ENCODE measurements at regions of chr6 and their contacts with region 1.

Region 1: DNA sequence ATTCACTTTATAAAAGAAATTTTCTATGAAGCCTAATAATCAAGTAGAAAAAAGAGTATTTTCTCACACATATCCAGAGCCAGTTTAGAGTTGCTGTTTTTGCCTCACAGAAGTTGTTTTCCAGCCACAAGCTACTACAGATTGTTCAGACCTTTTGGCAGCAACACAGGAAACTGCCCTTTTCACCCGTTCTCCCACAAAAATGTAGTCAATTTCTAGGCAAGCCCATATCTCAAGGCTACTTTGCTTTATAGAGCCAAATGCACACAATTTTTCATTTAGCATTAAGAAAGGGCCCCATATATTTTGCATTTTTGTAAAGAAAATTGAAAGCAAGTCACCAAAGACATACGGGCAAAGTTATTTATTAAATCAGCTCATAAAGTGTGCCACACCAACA is 49.5 kb downstream of the EPB41L2 start:
- DNase-seq: no peak
- ATAC-seq: no peak
- H3K4me3 ChIP-seq: no peak overlapping the region
- H3K27ac ChIP-seq: no peak overlapping the region
- H3K4me1 ChIP-seq: peaks cover 6% of the 10 kb centered on the region
- H3K27me3 ChIP-seq: no peaks in the 10 kb centered on the region
- CTCF ChIP-seq: no peak

Region 2: GRCh38 chr6:130933712-130934200 is 79.7 kb before region 1 on chr6:
- CTCF ChIA-PET with region 1: no interaction called
- POLR2A ChIA-PET with region 1: no interaction called
- intact Hi-C with region 1: loop called (anchors 5 kb)
- DNase-seq: peak; percentile 86
- ATAC-seq: peak; percentile 72
- H3K4me3 ChIP-seq: peak overlapping the region; percentile 32; the same call in 1 of the 2 replicates
- H3K27ac ChIP-seq: peak overlapping the region; percentile 66
- H3K4me1 ChIP-seq: peaks cover 75% of the 10 kb centered on the region
- H3K27me3 ChIP-seq: no peaks in the 10 kb centered on the region
- CTCF ChIP-seq: no peak

Region 3: DNA sequence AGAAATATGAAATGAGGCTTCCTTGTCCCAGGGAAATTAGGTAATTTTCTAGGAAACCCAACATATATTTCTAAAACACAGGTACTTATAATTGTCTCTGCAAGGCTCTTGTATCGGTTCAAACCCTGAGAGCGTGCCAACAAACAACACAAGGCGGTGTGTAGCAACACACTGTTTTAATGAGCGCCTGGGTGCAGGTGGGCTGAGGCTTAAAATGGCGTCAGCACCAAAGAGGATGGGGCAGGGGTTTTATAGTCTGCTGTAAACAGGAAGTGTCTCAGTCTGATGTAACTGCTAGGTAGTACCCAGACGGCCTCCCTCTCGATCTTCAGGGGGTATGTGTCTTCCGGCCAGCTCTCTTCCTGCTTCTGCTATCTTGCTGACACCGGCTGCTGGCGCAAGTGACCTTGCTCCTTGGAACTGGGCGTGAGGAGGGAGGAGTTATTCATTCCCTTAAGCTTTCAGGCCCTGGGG is 20.2 kb before region 1 on chr6:
- CTCF ChIA-PET with region 1: no interaction called
- POLR2A ChIA-PET with region 1: no interaction called
- intact Hi-C with region 1: loop called (anchors 1 kb)
- DNase-seq: no peak
- ATAC-seq: no peak
- H3K4me3 ChIP-seq: no peak overlapping the region
- H3K27ac ChIP-seq: no peak overlapping the region
- H3K4me1 ChIP-seq: peaks cover 21% of the 10 kb centered on the region
- H3K27me3 ChIP-seq: no peaks in the 10 kb centered on the region
- CTCF ChIP-seq: no peak